Transverse colon (tissue), 4 donors: ENCODE measurements at regions of chr7 and their contacts with region 1.

Region 1: DNA sequence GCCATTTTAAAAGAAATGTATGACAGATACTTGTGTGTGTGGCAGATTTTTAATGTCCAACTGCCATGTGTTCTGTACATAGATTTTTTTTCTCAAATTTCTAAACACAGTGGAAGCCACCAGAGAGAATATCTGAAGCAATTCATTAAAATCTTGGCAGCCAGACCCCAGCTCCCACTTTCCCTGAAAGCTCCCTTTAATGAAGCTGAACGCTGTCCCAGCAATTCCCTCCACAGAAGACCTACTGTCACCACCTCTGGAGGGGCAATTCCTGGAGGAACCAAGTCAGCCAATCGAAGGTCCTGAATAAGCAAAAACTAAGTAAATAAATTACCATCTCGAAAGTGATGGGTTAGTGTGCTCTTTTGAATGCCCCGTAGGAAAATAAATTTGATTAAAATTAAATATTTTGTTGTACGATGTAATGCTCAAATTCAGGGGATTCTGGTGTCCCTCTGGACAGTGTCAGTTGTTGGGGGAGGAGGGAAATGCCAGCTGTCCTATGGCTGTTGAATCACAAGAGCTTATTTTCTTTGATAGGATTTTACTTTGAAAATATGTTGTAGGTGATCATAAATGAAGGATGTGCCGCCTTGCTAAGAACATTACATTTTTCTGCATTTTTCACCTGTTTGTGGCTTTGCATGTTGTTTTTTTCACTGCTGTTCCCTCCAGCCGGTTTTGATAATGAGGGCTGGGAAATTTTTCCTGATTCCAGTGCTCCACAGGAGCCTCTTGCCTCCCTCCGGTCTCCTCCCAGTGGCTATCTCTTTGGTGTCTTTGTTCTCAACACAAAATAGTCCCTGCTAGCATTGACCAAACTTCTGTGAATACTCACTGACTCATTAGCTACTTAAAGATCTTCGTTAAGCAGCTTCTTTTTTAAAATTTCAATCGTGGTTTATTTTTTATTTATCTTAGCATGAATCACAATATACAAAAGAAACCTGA is 9.2 kb upstream of the GSAP start:
- DNase-seq: no peak
- H3K4me3 ChIP-seq: no peak overlapping the region
- H3K27ac ChIP-seq: peak overlapping the region in 2 of 4 donors; percentile 21 to 33
- H3K4me1 ChIP-seq: peaks cover 0 to 21% (median 0%) of the 10 kb centered on the region in 4 donors
- H3K27me3 ChIP-seq: no peaks in the 10 kb centered on the region
- CTCF ChIP-seq: no peak
- EP300 ChIP-seq: no peak
- POLR2A ChIP-seq: no peak

Region 2: DNA sequence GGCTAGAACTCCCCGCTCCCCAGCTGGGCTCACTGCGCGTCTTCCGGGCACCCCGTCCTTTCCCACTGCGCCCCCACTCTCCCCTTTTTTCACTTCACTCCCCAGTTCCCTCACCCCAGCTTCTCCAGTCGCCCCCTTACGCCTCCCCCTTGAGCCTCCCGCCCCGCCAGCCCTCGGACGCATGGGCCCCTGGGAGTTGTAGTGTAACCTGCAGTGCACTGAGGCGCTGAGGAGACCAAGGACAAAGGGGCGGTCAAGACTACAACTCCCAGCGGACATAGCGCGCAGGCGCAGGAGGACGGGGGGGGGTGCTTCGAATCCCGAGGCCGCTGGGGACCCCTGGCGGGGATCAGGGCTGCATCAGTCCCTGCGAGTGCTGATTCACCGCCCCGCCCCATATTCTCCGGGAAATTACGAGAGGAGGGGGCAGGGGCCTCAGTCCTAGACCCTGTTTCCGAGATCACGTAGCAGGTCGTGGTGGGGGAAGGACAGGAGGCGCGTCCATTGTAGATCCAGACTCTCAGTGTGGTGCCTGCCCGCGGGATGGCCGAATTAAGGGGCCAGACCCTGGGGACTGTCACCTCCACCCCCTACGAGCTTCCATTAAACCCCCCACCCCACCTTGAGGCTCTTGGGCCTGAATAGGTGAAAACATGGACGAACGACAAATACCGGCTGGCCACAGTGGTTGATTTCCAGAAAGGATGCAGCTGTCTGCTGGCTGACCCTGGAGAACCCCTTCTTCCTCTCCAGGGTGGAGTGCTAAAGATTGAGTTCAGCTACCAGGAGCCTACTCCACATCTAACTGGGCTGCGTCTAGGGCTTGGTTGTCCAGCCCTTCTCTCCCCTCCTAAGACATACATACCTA is 1066.0 kb before region 1 on chr7:
- in situ Hi-C with region 1: no loop called
- intact Hi-C with region 1: no loop called
- DNase-seq: peak; percentile 96
- H3K4me3 ChIP-seq: peak overlapping the region; percentile 83 to 99 (median 96)
- H3K27ac ChIP-seq: peak overlapping the region; percentile 99 to 100 (median 100)
- H3K4me1 ChIP-seq: peaks cover 10 to 44% (median 30%) of the 10 kb centered on the region in 4 donors
- H3K27me3 ChIP-seq: no peaks in the 10 kb centered on the region
- CTCF ChIP-seq: peak; percentile 59 to 96 (median 71)
- EP300 ChIP-seq: peak; percentile 66
- POLR2A ChIP-seq: no peak

Region 3: DNA sequence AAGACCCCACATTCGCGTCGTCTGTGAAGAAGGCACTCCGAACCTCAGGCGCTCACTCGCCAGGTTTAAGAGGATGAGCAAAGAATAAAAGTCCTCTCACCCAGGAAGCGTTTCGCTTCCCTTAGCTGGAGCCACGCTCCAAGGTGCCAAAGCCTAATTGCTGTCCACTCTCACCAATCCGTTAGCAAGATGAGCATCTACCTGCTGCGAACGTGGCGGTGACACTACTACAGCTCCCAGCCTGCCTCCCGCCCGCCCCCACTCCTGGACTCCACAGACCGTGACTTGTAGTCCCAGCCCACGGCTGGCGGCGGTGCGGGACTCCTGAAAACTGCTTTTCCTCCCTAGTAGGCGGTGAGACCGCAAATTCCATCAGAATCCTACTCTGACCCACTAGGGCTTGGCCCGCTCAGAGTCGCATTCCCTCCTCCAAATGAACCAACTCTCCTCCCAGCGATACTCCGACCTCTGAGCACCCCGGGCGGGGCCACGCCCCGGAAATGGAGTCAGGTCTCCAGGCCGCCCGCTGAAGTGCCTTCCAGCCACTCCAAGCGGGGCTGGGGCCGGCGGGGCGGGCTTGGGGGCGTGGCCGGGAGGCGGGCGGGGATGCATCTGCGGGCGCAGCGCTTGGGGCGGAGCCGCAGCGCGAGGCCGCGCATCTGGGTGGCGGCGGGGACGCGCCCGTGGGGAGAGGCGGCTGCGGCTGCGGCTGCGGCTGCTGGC is 111.2 kb after region 1 on chr7:
- in situ Hi-C with region 1: no loop called
- intact Hi-C with region 1: loop called (anchors 10 kb)
- DNase-seq: peak; percentile 99
- H3K4me3 ChIP-seq: peak overlapping the region; percentile 75 to 95 (median 82)
- H3K27ac ChIP-seq: peak overlapping the region; percentile 93 to 99 (median 97)
- H3K4me1 ChIP-seq: peaks cover 8 to 33% (median 13%) of the 10 kb centered on the region in 4 donors
- H3K27me3 ChIP-seq: no peaks in the 10 kb centered on the region
- CTCF ChIP-seq: no peak
- EP300 ChIP-seq: no peak
- POLR2A ChIP-seq: peak; percentile 95